Upper lobe of right lung (tissue), 1 donor: ENCODE measurements at regions of chr2 and their contacts with region 1.

Region 1: GRCh38 chr2:189569295-189569910 is 11.2 kb downstream of the SLC40A1 start:
- DNase-seq: no peak
- ATAC-seq: peak; percentile 48
- H3K4me3 ChIP-seq: no peak overlapping the region
- H3K27ac ChIP-seq: peak overlapping the region; percentile 52
- H3K4me1 ChIP-seq: peaks cover 56% of the 10 kb centered on the region
- H3K27me3 ChIP-seq: no peaks in the 10 kb centered on the region
- CTCF ChIP-seq: no peak

Region 2: GRCh38 chr2:189466660-189467059 is 102.7 kb before region 1 on chr2:
- intact Hi-C with region 1: loop called (anchors 10 kb)
- DNase-seq: no peak
- ATAC-seq: no peak
- H3K4me3 ChIP-seq: no peak overlapping the region
- H3K27ac ChIP-seq: no peak overlapping the region
- H3K4me1 ChIP-seq: no peaks in the 10 kb centered on the region
- H3K27me3 ChIP-seq: no peaks in the 10 kb centered on the region
- CTCF ChIP-seq: peak; percentile 63

Region 3: DNA sequence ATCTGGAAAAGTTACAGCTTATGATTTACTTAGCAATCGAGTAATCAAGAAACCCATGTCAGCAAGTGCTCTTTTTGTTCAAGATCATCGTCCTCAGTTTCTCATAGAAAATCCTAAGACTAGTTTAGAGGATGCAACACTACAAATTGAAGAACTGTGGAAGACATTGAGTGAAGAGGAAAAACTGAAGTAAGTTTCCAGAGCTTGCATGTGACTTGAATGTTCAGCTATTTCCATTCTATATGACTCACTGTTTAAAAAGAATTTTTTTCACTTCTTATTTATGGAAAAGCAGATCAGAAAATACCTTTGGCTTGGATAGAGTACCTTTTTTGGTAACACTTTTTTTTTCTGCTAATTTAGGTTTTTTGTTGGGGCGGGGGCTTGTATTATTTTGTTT is 285.5 kb after region 1 on chr2:
- intact Hi-C with region 1: no loop called
- DNase-seq: no peak
- ATAC-seq: no peak
- H3K4me3 ChIP-seq: no peak overlapping the region
- H3K27ac ChIP-seq: no peak overlapping the region
- H3K4me1 ChIP-seq: no peaks in the 10 kb centered on the region
- H3K27me3 ChIP-seq: no peaks in the 10 kb centered on the region
- CTCF ChIP-seq: no peak